H1 (cell line): ENCODE measurements at regions of chr12 and their contacts with region 1.

Region 1: DNA sequence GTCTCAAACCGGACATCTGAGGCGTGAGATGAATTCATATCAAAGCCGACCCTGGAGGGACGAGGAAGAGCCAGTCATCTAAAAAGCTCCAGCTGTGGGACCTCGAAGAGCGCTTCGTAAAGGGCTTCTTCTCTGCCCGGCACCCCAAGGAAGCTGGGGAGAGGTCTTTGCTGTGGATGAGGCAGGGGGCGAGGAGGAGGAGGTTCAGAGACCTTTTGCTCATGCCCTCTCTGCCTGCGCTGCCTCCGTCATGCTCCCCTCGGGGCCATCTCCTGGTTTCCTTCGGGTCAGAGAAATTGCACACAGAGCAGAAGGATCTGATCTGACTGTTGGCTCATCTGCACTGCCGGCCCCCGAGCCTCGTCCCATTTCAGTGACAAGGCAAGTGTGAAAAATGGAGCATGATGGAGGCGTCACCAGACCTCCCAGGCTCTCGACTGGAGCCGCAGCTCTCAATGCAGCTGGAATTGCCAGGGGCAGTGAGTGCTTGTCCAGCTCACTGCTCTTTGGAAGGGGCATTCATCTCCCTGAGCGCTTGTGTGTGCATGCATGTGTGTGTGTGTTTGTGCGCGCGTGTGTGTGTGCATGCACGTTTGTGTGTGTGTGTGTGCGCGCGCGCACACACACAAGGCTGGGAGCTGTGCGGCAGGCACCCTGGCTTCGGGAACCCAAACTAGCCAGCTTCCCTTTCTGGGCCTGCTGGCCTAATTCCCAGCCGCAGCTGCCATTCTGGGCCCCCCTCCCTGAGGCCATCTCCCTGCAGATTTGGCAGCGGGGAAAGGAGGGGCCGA is 9.2 kb downstream of the CABP1 start:
- DNase-seq: no peak
- H3K4me3 ChIP-seq: peak overlapping the region in 3 of 4 experiments; percentile 44 to 64 (median 63); a peak in 4 of 8 replicates
- H3K27ac ChIP-seq: no peak overlapping the region
- H3K4me1 ChIP-seq: peaks cover 4 to 7% (median 4%) of the 10 kb centered on the region in 4 experiments
- H3K27me3 ChIP-seq: no peaks in the 10 kb centered on the region
- CTCF ChIP-seq: no peak
- EP300 ChIP-seq: no peak
- POLR2A ChIP-seq: no peak
- RAD21 ChIP-seq: no peak

Region 2: GRCh38 chr12:120580787-120581723 is 68.6 kb before region 1 on chr12 and contains the start of gene POP5:
- CTCF ChIA-PET with region 1: interaction called, 111 read pairs
- POLR2A ChIA-PET with region 1: interaction called, 6 read pairs
- DNase-seq: peak; percentile 94 to 97
- H3K4me3 ChIP-seq: peak within 1 kb of the TSS; percentile 86 to 97 (median 87)
- H3K27ac ChIP-seq: peak within 1 kb of the TSS; percentile 70; the same call in 1 of the 2 replicates
- H3K4me1 ChIP-seq: peaks cover 0 to 3% (median 1%) of the 10 kb centered on the region in 4 experiments; a peak in 4 of 7 replicates
- H3K27me3 ChIP-seq: peaks cover 0 to 2% (median 0%) of the 10 kb centered on the region in 4 experiments; a peak in 1 of 7 replicates
- CTCF ChIP-seq: no peak
- EP300 ChIP-seq: no peak
- POLR2A ChIP-seq: peak; percentile 59 to 83
- RAD21 ChIP-seq: 0 out of 4 replicates have a peak, but pooled peaks of 1 of the 2 experiments have one; percentile 4
- total RNA-seq, gene POP5: 54.7 and 59.7 TPM in 2 replicates

Region 3: DNA sequence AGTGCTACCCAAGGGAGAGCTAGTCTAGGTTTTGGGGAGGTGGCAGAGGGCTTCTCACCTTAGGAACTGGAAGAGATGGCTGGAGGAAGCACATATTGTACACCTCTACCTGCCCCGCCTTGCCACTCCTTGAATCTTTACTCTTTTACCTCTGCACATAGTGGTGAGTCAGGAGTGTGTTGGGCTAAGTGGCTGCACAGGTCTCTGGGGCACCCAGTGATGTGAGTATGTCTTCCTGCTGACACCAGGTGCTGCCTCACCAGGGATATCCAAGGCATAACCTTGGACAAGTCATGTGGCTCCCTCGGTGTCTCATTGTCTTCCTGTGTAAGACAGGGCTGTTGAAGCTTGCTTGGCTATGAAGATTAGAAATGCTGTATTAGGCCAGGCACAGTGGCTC is 29.0 kb before region 1 on chr12:
- CTCF ChIA-PET with region 1: interaction called, 70 read pairs
- POLR2A ChIA-PET with region 1: no interaction called
- DNase-seq: no peak
- H3K4me3 ChIP-seq: no peak overlapping the region
- H3K27ac ChIP-seq: no peak overlapping the region
- H3K4me1 ChIP-seq: peaks cover 0 to 4% (median 4%) of the 10 kb centered on the region in 4 experiments; a peak in 4 of 7 replicates
- H3K27me3 ChIP-seq: peaks cover 0 to 3% (median 0%) of the 10 kb centered on the region in 4 experiments; a peak in 1 of 7 replicates
- CTCF ChIP-seq: no peak
- EP300 ChIP-seq: no peak
- POLR2A ChIP-seq: no peak
- RAD21 ChIP-seq: no peak

Region 4: GRCh38 chr12:120662879-120663278 is 13.2 kb after region 1 on chr12:
- CTCF ChIA-PET with region 1: interaction called, 100 read pairs
- POLR2A ChIA-PET with region 1: interaction called, 5 read pairs
- DNase-seq: no peak
- H3K4me3 ChIP-seq: no peak overlapping the region
- H3K27ac ChIP-seq: no peak overlapping the region
- H3K4me1 ChIP-seq: peaks cover 0 to 2% (median under 1%) of the 10 kb centered on the region in 4 experiments; a peak in 1 of 7 replicates
- H3K27me3 ChIP-seq: no peaks in the 10 kb centered on the region
- CTCF ChIP-seq: no peak
- EP300 ChIP-seq: no peak
- POLR2A ChIP-seq: no peak
- RAD21 ChIP-seq: no peak

Region 5: GRCh38 chr12:120677765-120678473 is 28.3 kb after region 1 on chr12:
- CTCF ChIA-PET with region 1: interaction called, 83 read pairs
- POLR2A ChIA-PET with region 1: interaction called, 3 read pairs
- DNase-seq: peak in 1 of 2 experiments; percentile 41
- H3K4me3 ChIP-seq: no peak overlapping the region
- H3K27ac ChIP-seq: no peak overlapping the region
- H3K4me1 ChIP-seq: peaks cover 0 to 6% (median 0%) of the 10 kb centered on the region in 4 experiments; a peak in 2 of 7 replicates
- H3K27me3 ChIP-seq: no peaks in the 10 kb centered on the region
- CTCF ChIP-seq: no peak
- EP300 ChIP-seq: no peak
- POLR2A ChIP-seq: no peak
- RAD21 ChIP-seq: no peak

Region 6: DNA sequence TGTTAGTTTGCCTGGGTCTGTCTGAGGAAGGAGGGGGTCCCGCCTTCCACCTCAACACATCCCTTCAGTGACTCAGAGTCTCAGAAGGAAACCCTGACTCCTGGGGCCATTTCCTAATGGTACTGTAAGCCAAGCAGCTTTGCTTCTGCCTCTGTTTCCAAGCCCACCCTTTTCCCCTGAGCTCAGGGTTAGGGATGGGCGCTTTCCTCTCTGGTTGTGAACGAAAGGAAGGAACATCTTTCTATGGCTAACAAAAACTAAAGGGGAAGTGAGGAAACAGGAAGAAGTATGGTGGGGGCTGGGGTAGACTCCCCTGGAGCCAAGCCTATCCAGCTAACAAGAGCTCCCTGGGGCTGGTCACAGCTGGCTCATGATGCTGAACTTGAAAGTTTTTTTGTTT is 49.0 kb after region 1 on chr12:
- CTCF ChIA-PET with region 1: interaction called, 87 read pairs
- POLR2A ChIA-PET with region 1: interaction called, 3 read pairs
- DNase-seq: no peak
- H3K4me3 ChIP-seq: no peak overlapping the region
- H3K27ac ChIP-seq: no peak overlapping the region
- H3K4me1 ChIP-seq: peaks cover 0 to 7% (median 4%) of the 10 kb centered on the region in 4 experiments; a peak in 5 of 7 replicates
- H3K27me3 ChIP-seq: no peaks in the 10 kb centered on the region
- CTCF ChIP-seq: no peak
- EP300 ChIP-seq: no peak
- POLR2A ChIP-seq: no peak
- RAD21 ChIP-seq: no peak

Region 7: GRCh38 chr12:120971299-120972179 is 321.9 kb after region 1 on chr12:
- CTCF ChIA-PET with region 1: interaction called, 10 read pairs
- POLR2A ChIA-PET with region 1: no interaction called
- DNase-seq: no peak
- H3K4me3 ChIP-seq: no peak overlapping the region
- H3K27ac ChIP-seq: no peak overlapping the region
- H3K4me1 ChIP-seq: peaks cover 0 to 3% (median under 1%) of the 10 kb centered on the region in 4 experiments; a peak in 3 of 7 replicates
- H3K27me3 ChIP-seq: no peaks in the 10 kb centered on the region
- CTCF ChIP-seq: peak in 2 of 3 experiments; percentile 61 to 81; a peak in 3 of 4 replicates
- EP300 ChIP-seq: no peak
- POLR2A ChIP-seq: no peak
- RAD21 ChIP-seq: peak; percentile 84 to 89

Region 8: DNA sequence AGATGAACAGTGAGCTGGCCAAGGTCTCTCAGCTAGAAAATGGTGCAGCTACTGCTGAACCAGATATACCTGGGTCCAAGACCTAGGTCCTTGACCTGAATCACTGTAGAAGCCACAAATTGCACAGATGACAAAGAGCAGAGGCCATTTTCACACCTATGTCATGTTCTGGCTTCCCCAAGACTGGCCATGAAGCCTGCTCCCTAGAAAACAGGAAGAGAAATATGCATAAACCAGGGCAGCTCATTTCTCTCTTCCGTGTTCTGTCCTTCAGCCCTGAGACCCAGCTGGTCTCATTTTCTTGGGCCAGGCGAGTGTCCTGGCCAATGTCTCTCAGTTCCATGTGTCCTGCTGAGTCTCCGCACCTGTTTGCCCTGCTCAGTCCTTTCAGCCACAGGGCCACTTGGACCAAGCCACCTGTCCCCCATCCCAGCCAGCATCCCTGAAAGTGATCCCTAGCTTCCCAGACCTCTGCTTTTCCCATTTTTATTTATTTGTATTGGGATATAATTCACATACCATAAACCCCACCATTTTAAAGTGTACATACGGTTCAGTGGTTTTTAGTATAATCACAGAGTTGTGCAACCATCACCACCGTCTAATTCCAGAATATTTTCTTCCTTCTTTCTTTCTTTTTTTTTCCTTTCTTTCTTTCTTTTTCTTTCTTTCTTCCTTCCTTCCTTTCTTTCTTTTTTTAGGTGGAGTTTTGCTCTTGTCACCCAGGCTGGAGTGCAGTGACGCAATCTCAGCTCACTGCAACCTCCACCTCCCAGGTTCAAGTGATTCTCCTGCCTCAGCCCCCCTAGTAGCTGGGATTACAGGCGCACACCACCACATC is 510.1 kb after region 1 on chr12:
- CTCF ChIA-PET with region 1: no interaction called
- POLR2A ChIA-PET with region 1: no interaction called
- DNase-seq: no peak
- H3K4me3 ChIP-seq: no peak overlapping the region
- H3K27ac ChIP-seq: no peak overlapping the region
- H3K4me1 ChIP-seq: peaks cover 0 to 2% (median 0%) of the 10 kb centered on the region in 4 experiments; a peak in 2 of 7 replicates
- H3K27me3 ChIP-seq: no peaks in the 10 kb centered on the region
- CTCF ChIP-seq: no peak
- EP300 ChIP-seq: no peak
- POLR2A ChIP-seq: no peak
- RAD21 ChIP-seq: no peak